Heart left ventricle (tissue), 16 donors: ENCODE measurements at regions of chr9 and their contacts with region 1.

Region 1: GRCh38 chr9:31783491-31783890 is 601.0 kb upstream of the ACO1 start:
- DNase-seq: no peak
- ATAC-seq: no peak
- H3K4me3 ChIP-seq: no peak overlapping the region
- H3K27ac ChIP-seq: no peak overlapping the region
- H3K4me1 ChIP-seq: no peaks in the 10 kb centered on the region
- H3K27me3 ChIP-seq: no peaks in the 10 kb centered on the region
- CTCF ChIP-seq: no peak
- POLR2A ChIP-seq: no peak

Region 2: GRCh38 chr9:30970812-30971211 is 812.7 kb before region 1 on chr9:
- intact Hi-C with region 1: loop called in 1 of 10 experiments (anchors 10 kb)
- DNase-seq: no peak
- ATAC-seq: no peak
- H3K4me3 ChIP-seq: no peak overlapping the region
- H3K27ac ChIP-seq: no peak overlapping the region
- H3K4me1 ChIP-seq: no peaks in the 10 kb centered on the region
- H3K27me3 ChIP-seq: no peaks in the 10 kb centered on the region
- CTCF ChIP-seq: no peak
- POLR2A ChIP-seq: no peak

Region 3: GRCh38 chr9:32247168-32247567 is 463.7 kb after region 1 on chr9:
- intact Hi-C with region 1: no loop called
- DNase-seq: no peak
- ATAC-seq: no peak
- H3K4me3 ChIP-seq: no peak overlapping the region
- H3K27ac ChIP-seq: no peak overlapping the region
- H3K4me1 ChIP-seq: no peaks in the 10 kb centered on the region
- H3K27me3 ChIP-seq: peaks cover 0 to 3% (median 0%) of the 10 kb centered on the region in 9 donors
- CTCF ChIP-seq: no peak
- POLR2A ChIP-seq: no peak

Region 4: DNA sequence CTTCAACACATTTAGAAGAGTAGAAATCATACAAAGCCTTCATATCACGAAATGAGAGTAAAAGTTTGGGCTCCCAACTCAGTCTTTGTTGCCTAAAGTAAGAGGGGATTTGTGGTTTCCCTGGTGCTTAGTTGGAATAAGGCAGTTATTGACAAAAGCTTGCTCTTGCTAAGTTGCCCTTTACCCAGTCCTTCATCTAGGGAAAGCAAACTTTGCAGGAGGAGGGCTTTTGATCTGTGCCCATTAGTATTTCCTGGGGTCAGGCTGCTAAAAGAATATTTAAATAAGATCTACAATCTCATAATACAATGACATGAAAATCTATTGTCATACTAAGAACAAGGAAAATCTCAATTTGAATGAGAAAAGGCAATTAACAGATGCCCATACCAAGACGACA is 516.9 kb after region 1 on chr9:
- intact Hi-C with region 1: no loop called
- DNase-seq: no peak
- ATAC-seq: no peak
- H3K4me3 ChIP-seq: no peak overlapping the region
- H3K27ac ChIP-seq: no peak overlapping the region
- H3K4me1 ChIP-seq: no peaks in the 10 kb centered on the region
- H3K27me3 ChIP-seq: no peaks in the 10 kb centered on the region
- CTCF ChIP-seq: no peak
- POLR2A ChIP-seq: no peak